ENCODE measurements at regions of chr1 and their contacts with region 1.

Region 1: DNA sequence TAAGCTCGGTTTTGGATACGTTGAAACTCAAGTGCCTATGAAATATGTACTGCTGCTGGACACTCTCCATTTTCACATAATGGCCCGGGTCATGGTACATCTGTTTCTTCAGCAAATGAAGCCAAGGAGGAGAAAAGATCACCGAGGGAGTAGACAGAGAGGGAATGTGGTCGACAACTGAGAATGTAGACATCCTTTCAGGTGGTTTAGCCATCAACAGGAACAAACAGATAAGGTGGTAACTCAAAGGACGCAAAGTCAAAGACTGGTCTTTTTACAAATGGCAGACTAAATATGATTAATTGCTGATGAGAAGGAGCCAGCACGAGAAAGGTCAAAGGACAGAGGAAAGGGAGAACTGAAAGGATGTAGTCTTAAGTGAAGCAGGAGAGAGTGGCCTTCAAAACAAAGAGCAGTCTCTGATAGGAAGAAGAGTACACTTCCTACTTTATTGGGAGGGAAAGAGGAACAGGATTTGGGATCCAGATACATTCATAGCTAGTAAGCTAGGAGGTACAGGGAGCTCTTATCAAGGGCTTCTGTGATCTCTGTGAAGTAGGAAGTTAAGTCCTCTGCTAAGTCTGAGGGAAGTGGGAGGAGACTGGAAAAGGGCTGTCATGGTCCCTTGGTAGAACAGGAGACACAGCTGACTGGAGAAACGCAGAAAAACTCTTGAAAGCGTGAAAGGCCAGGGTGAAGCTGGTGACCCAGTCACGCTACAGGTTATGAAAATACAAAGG is 28.3 kb downstream of the NUP133 start:
- DNase-seq: no peak
- ATAC-seq: no peak
- H3K4me3 ChIP-seq: no peak overlapping the region
- H3K27ac ChIP-seq: no peak overlapping the region
- H3K4me1 ChIP-seq: no peaks in the 10 kb centered on the region
- CTCF ChIP-seq: no peak
- EP300 ChIP-seq: no peak
- POLR2A ChIP-seq: no peak
- RAD21 ChIP-seq: no peak

Region 2: GRCh38 chr1:229430761-229431283 is 49.0 kb before region 1 on chr1:
- CTCF ChIA-PET with region 1: no interaction called
- POLR2A ChIA-PET with region 1: no interaction called
- DNase-seq: no peak
- ATAC-seq: peak; percentile 25 to 28; a peak in 3 of 6 replicates
- H3K4me3 ChIP-seq: no peak overlapping the region
- H3K27ac ChIP-seq: no peak overlapping the region
- H3K4me1 ChIP-seq: no peaks in the 10 kb centered on the region
- CTCF ChIP-seq: no peak
- EP300 ChIP-seq: no peak
- POLR2A ChIP-seq: no peak
- RAD21 ChIP-seq: no peak

Region 3: DNA sequence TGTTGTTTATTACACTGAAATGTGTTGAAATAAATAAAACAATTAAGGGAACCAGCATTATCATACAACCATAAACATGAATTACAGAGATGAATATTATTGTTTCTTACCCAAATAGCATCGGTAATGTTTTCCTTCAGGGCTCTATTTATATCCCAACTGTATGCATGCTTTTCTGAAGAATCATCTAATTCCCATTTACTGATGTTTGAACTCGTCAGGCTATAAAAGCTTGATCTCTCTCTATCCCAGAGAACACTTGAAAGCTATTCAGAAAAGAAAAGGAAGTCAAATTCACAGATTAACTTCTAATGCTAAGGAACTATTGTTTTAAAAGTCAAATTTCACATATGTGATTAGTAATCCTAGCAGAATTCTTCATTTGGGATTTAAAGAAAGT is 16.0 kb after region 1 on chr1:
- CTCF ChIA-PET with region 1: interaction called, 19 read pairs
- POLR2A ChIA-PET with region 1: no interaction called
- DNase-seq: no peak
- ATAC-seq: no peak
- H3K4me3 ChIP-seq: no peak overlapping the region
- H3K27ac ChIP-seq: no peak overlapping the region
- H3K4me1 ChIP-seq: no peaks in the 10 kb centered on the region
- CTCF ChIP-seq: no peak
- EP300 ChIP-seq: no peak
- POLR2A ChIP-seq: no peak
- RAD21 ChIP-seq: no peak

Region 4: DNA sequence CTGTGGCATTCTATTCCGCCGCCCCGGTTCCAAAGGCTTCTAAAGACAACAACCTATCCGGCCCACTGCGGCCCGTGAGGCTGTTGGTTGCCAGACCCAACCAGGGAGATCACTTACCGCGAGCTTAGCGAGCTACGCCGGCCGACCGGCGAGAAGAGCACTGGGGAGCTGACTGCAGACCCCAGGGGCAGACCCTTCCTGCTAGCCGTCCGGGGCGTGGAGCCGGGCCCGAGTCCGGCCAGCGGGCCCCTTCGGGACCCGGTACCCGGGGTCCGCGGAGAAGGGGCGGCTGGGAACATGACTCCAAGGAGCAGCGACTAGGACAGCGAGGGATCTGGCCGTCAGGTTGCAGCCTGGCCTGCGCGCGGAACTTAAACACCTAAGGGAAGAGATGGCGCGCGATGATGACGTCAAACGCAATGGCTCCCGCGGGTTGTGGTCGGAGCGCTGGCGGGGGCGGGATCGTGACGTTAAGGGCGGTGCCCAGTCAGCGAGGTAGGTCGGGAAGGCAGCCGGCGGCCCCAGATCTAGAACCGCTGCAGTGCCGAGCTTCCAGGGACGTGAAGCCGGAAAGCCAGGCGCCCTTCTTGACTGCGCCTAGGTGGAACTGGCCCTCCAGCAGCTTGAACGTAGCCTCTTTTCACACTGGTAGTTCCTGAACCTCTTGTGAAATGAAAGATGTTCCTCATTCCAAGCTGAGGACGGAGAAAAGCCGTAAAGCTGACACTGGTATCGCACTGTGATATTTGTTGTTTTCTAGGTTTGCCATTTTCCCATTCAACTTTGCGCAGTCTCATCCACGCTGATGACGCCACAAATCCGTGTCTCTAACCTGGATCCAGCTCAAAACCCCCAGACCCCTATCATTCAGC is 28.4 kb after region 1 on chr1 and contains the start of gene NUP133:
- CTCF ChIA-PET with region 1: interaction called, 12 read pairs
- POLR2A ChIA-PET with region 1: interaction called, 15 read pairs
- DNase-seq: peak; percentile 93 to 99
- ATAC-seq: peak; percentile 97
- H3K4me3 ChIP-seq: peak within 1 kb of the TSS; percentile 82
- H3K27ac ChIP-seq: peak within 1 kb of the TSS; percentile 90 to 94
- H3K4me1 ChIP-seq: peaks cover 18% of the 10 kb centered on the region
- CTCF ChIP-seq: no peak
- EP300 ChIP-seq: no peak
- POLR2A ChIP-seq: peak; percentile 94
- RAD21 ChIP-seq: no peak
- polyA plus RNA-seq, gene NUP133: 43.2 and 45.9 TPM in 2 replicates

Region 5: GRCh38 chr1:229607370-229607769 is 127.5 kb after region 1 on chr1:
- CTCF ChIA-PET with region 1: no interaction called
- POLR2A ChIA-PET with region 1: no interaction called
- DNase-seq: no peak
- ATAC-seq: no peak
- H3K4me3 ChIP-seq: no peak overlapping the region
- H3K27ac ChIP-seq: no peak overlapping the region
- H3K4me1 ChIP-seq: no peaks in the 10 kb centered on the region
- CTCF ChIP-seq: no peak
- EP300 ChIP-seq: no peak
- POLR2A ChIP-seq: no peak
- RAD21 ChIP-seq: no peak

Measured in A549 (cell line).